ENCODE measurements at regions of chr12 and their contacts with region 1.

Region 1: GRCh38 chr12:13211859-13212664 is 15.5 kb downstream of the EMP1 start:
- DNase-seq: peak; percentile 84

Region 2: GRCh38 chr12:12786716-12787601 is 425.1 kb before region 1 on chr12:
- in situ Hi-C with region 1: loop called (anchors 25 kb)
- DNase-seq: peak; percentile 78

Region 3: DNA sequence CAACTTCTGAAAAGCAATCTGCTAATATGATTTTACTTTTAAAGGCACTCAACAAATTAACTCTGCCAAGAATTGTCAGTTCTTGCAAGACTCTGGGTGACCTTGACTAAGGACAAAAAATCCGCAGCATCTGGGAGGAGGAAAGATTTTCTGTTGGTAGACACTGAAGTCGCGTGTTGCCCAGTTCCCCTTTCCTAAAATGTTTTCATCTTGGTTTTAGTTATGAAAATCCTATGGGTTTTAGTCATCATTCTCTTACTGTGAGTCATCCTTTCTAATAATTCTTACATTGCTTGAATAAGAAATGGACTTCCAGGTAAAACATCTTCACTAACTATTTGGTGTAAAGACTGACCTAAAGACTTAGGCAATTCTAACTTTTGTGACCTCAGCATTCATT is 117.7 kb before region 1 on chr12:
- in situ Hi-C with region 1: loop called (anchors 10 kb)
- DNase-seq: peak; percentile 56

Measured in KBM-7 (cell line).